Posterior vena cava (tissue), 2 donors: ENCODE measurements at regions of chr12 and their contacts with region 1.

Region 1: GRCh38 chr12:67096533-67097318 is 172.4 kb upstream of the CAND1 start:
- DNase-seq: no peak

Region 2: DNA sequence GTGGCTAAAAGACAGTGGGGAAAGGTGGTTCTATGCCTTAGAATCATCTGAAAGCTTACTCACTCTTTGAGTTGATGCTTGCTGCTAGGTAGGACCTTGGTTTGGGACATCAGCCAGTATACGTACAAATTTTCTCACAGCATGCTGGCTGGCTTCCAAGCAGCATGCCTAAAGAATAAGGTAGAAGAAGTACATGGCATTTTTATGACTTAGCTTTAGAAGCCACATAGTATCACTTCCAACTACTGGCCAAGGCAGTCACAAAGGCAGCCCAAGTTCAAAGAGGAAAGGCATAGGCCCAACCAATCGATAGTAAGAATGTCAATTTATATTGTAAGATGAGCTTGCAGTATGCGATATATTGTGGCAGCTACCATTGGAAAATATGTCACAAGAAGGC is 111.8 kb before region 1 on chr12:
- intact Hi-C with region 1: no loop called
- DNase-seq: no peak

Region 3: DNA sequence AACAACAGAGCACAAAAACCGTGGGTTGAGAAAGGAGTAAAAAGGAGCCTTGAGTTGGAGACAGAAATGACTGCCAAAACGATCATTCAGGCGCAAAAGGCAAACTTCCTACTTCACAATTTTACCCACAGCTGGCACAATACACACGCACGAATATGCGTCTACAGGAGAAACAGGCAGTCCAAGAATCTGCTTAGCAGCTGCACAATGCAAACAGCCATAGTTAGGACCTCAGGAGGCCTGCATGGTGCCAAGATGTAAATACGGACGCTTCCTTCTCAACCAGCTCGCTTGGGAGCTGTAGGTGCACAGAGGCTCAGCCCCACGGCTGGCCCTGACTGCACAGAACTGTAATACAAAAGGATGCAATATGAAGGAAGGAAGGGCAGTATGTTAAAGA is 77.7 kb before region 1 on chr12:
- intact Hi-C with region 1: loop called in 1 of 2 experiments (anchors 10 kb)
- DNase-seq: no peak